Tibial artery (tissue), 4 donors: ENCODE measurements at regions of chr6 and their contacts with region 1.

Region 1: DNA sequence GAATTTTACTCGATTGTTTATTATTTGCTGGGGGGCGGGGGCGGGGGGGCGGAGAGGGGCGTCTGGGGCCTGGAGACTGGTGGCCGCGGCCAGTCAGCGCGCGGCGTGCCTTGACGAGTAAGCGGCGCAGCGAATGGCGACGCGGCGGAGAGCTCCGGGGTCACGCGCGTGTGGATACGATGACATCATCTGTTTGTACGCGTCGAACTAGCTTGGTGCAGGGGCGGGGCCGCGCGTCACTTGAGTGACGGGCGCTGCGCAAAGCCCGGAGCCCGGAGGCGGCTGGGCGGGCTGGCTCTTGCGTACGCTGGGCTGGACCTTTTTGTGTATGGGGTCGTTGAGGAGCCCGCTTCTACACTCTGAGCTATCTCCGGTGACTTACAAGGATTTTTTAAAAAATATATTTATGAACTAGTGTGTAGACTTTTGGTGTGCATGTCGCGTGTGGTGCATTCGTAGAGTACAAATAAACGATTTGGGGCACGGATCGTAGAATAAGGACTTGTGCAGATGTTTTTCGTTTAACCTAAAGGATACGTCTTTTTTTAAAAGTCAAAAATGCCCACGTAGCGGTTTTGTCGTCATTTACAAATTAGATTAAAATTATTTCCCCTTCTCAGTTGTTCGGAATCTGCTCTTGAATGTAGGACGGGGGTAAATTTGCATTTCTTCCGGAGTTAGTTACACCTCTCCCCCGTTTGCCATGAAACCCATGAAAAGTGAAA is 2.2 kb upstream of the FOXO3 start:
- DNase-seq: peak; percentile 98 to 99
- H3K4me3 ChIP-seq: peak overlapping the region; percentile 86 to 97
- H3K27ac ChIP-seq: peak overlapping the region; percentile 97 to 99
- H3K4me1 ChIP-seq: peaks cover 0 to 31% (median 16%) of the 10 kb centered on the region in 4 donors
- H3K27me3 ChIP-seq: no peaks in the 10 kb centered on the region
- CTCF ChIP-seq: no peak

Region 2: GRCh38 chr6:108222504-108222903 is 336.0 kb before region 1 on chr6:
- intact Hi-C with region 1: no loop called
- DNase-seq: no peak
- H3K4me3 ChIP-seq: no peak overlapping the region
- H3K27ac ChIP-seq: no peak overlapping the region
- H3K4me1 ChIP-seq: no peaks in the 10 kb centered on the region
- H3K27me3 ChIP-seq: no peaks in the 10 kb centered on the region
- CTCF ChIP-seq: no peak

Region 3: GRCh38 chr6:108592371-108593337 is 34.1 kb after region 1 on chr6:
- intact Hi-C with region 1: no loop called
- DNase-seq: peak in 1 of 2 donors; percentile 68
- H3K4me3 ChIP-seq: peak overlapping the region in 1 of 2 donors; percentile 22
- H3K27ac ChIP-seq: peak overlapping the region; percentile 69 to 83
- H3K4me1 ChIP-seq: peaks cover 0 to 99% (median 90%) of the 10 kb centered on the region in 4 donors
- H3K27me3 ChIP-seq: no peaks in the 10 kb centered on the region
- CTCF ChIP-seq: no peak

Region 4: DNA sequence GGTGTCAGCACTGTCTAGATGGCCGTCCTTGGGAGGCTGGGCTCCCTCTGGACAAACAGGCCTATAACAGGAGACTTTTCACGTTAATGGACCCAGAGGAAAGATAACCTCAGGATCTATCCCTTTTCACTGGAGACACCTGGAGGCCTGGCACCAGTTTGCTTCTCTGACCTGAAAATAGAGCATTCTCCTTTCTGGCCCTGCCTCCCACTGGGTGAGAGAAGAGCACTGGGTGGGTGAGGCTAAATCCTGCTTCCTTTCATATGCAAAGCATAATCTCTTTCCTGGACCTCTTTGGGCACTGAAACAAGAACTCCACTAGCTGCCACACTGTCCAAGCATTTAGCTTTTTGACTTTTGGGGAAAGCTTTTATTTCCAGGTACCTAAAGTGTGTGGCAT is 80.5 kb after region 1 on chr6:
- intact Hi-C with region 1: no loop called
- DNase-seq: no peak
- H3K4me3 ChIP-seq: no peak overlapping the region
- H3K27ac ChIP-seq: no peak overlapping the region
- H3K4me1 ChIP-seq: peaks cover 0 to 86% (median 27%) of the 10 kb centered on the region in 4 donors
- H3K27me3 ChIP-seq: no peaks in the 10 kb centered on the region
- CTCF ChIP-seq: no peak

Region 5: DNA sequence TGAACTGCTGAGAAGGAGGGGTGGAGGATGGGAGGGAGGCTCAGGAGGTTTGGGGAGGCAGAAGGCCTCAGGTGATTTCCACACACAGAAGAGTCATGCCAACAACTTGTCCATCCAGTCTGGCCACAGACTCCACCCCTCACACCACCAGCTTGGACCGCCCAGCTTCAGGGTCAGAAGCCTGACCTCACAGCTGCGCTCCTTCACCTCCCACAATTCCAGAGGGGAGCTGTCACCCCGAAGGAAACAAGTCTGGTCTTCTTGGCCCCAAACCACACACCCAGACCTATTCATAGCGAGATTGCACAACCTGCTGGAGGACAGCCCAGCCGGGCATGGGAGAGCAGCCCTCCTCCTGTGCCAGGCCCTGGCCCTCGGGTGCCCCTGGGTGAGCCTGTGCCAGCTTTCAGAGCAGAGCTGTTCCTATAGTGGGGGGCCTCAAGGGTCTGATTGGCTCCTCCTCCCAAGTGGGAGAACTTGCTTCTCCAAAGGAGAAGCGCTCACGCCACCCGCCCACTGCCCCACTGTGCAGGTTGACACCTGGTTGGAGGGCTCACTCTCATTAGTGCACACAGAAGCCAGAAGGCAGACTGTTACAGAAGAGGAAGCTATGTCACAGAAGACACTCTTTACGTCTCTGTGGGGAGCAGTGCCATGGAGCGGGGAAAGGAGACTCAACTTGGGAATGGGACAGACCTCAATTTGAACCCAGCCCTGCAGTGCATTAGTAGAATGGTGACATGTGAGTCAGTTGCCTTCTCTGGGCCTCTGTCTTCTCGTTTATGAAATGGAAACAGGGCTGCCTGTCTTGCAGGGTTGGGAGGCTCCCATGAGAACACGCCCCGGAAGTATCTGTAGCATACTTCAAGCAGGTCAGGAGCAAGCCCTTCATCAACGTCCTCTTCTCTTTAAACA is 131.0 kb after region 1 on chr6:
- intact Hi-C with region 1: loop called (anchors 10 kb)
- DNase-seq: peak; percentile 92 to 98
- H3K4me3 ChIP-seq: no peak overlapping the region
- H3K27ac ChIP-seq: peak overlapping the region; percentile 69 to 71
- H3K4me1 ChIP-seq: peaks cover 0 to 65% (median 45%) of the 10 kb centered on the region in 4 donors
- H3K27me3 ChIP-seq: no peaks in the 10 kb centered on the region
- CTCF ChIP-seq: no peak